Caco-2 (cell line): ENCODE measurements at regions of chr2 and their contacts with region 1.

Region 1: GRCh38 chr2:15636972-15637785 is 45.5 kb downstream of the DDX1 start:
- DNase-seq: peak; percentile 72 to 80
- H3K4me3 ChIP-seq: no peak overlapping the region
- H3K4me3 Mint-ChIP-seq: no peak overlapping the region
- H3K27ac Mint-ChIP-seq: no peak overlapping the region
- H3K4me1 ChIP-seq: peaks cover 55% of the 10 kb centered on the region
- H3K4me1 Mint-ChIP-seq: peaks cover 32% of the 10 kb centered on the region
- H3K27me3 ChIP-seq: no peaks in the 10 kb centered on the region
- H3K27me3 Mint-ChIP-seq: no peaks in the 10 kb centered on the region
- CTCF ChIP-seq: peak; percentile 85 to 98

Region 2: DNA sequence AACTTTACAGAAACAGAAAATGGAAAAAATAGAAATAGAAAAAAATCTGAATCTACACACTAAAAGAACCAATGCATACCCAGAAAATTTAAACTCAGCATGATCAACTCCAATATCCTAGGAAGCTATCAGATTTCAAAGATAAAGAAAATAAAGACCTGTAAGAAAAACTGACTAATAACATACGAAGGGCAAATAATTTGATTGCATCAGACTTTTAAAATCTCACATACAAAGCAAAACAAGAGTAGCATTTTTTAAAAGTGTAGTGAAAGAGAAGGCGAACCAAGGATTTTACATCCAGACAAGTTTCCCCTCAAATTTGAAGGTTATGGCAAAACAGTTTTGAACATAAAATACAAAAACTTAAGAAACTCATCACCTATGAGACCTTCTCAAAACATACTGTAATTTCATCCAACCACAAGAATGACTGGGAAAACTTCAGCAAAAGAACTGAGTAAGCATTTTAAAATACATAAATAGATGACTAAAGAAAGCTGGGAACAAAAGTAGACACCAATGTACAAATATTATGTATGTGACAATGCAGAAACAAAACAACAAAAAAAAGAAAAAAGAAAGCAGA is 130.9 kb before region 1 on chr2:
- CTCF ChIA-PET with region 1: no interaction called
- POLR2A ChIA-PET with region 1: no interaction called
- intact Hi-C with region 1: no loop called
- DNase-seq: no peak
- H3K4me3 ChIP-seq: no peak overlapping the region
- H3K4me3 Mint-ChIP-seq: no peak overlapping the region
- H3K27ac Mint-ChIP-seq: peak overlapping the region; percentile 36
- H3K4me1 ChIP-seq: no peaks in the 10 kb centered on the region
- H3K4me1 Mint-ChIP-seq: peaks cover 7% of the 10 kb centered on the region
- H3K27me3 ChIP-seq: no peaks in the 10 kb centered on the region
- H3K27me3 Mint-ChIP-seq: no peaks in the 10 kb centered on the region
- CTCF ChIP-seq: no peak

Region 3: DNA sequence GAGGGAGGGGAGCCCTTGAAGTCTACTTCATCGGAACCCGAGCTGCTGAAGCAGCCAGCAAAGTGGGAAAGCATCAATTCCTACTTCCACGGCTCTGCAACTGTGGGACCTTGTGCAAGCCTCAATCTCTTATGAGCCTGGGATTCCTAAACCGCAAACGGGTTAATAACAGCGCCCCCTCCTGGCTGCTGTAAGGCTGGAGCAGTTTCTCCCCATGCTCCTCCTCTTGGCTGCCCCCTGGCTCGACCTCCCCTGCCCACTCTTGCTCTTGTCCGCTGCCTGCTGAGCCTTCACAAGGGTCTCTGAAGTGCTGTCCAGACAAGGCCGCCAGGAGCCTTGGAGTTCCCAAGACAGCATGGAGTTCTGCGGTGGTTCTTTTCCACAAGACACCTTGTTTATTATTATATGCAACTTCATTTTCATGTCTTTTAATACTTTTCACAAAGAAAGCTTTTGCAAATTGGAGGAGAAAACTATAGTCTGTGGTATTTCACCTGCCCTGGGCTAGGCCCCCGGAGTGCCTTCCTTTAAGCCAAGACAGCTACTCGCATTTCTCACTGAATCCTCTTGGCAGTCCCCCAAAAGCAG is 111.7 kb after region 1 on chr2:
- CTCF ChIA-PET with region 1: no interaction called
- POLR2A ChIA-PET with region 1: no interaction called
- intact Hi-C with region 1: loop called (anchors 5 kb)
- DNase-seq: peak in 1 of 2 experiments; percentile 59
- H3K4me3 ChIP-seq: no peak overlapping the region
- H3K4me3 Mint-ChIP-seq: no peak overlapping the region
- H3K27ac Mint-ChIP-seq: peak overlapping the region; percentile 93
- H3K4me1 ChIP-seq: peaks cover 74% of the 10 kb centered on the region
- H3K4me1 Mint-ChIP-seq: peaks cover 48% of the 10 kb centered on the region
- H3K27me3 ChIP-seq: no peaks in the 10 kb centered on the region
- H3K27me3 Mint-ChIP-seq: no peaks in the 10 kb centered on the region
- CTCF ChIP-seq: peak; percentile 27 to 40

Region 4: DNA sequence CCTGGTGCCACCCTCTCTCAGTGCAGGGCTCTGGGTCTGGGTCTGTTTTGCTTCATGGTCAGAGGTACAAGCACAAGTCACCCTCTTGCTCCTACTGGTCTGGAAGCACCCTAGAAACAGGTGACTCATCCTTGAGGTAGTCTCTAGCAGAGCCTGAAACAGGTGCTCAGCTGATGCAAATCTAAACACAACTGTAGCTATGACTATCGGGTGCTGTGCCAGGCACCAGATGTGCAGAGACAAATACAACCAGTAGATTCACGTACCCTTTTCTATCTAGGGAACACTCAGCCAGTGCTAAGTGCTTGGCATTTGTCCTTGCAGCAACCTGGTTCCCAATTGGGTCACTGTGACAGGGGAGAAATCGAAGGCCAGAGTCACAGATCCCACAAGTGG is 162.3 kb after region 1 on chr2:
- CTCF ChIA-PET with region 1: no interaction called
- POLR2A ChIA-PET with region 1: no interaction called
- intact Hi-C with region 1: loop called (anchors 1 kb)
- DNase-seq: no peak
- H3K4me3 ChIP-seq: no peak overlapping the region
- H3K4me3 Mint-ChIP-seq: no peak overlapping the region
- H3K27ac Mint-ChIP-seq: peak overlapping the region; percentile 62
- H3K4me1 ChIP-seq: peaks cover 49% of the 10 kb centered on the region
- H3K4me1 Mint-ChIP-seq: peaks cover 39% of the 10 kb centered on the region
- H3K27me3 ChIP-seq: no peaks in the 10 kb centered on the region
- H3K27me3 Mint-ChIP-seq: no peaks in the 10 kb centered on the region
- CTCF ChIP-seq: no peak

Region 5: DNA sequence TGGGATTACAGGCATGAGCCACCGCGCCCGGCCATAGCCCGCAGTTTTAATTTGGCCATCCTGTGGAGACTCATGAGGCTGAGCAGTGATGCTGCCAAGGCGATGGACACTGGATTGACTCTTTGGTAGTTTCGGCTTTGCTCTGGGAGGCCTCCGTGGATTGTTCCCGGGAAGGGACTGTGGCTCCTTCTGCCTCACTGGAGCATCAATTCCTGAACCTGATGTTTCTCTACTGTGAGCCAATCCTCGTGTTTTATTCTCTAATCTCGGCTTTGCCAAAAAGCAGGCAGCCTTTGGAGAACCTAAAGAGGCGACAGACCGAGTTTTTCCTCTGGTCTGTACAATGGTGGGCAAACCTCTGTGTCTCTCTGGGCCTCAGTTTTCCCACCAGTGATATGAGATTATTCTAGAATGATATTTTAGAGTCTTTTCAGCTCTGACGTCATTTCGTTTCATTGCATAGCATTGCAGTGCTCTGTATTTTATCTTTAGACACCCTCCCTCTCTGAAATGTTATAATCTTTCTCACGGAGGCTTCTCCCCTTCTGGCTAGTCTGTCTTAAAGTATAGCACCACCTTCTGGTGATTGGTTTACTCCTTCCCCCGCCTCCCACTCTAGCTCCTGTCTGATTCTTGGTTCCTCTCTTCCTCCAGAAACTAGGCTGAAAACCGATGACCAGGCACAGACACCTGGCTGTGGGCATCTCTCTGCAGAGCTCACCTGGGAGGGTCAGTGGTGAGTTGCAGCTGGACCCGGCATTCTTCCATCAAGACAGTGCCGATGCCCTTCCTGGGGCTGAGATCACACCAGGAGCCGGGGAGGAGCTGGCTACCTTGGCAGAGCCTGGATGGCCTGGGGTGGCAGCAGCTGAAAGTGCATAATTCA is 644.5 kb after region 1 on chr2:
- CTCF ChIA-PET with region 1: no interaction called
- POLR2A ChIA-PET with region 1: no interaction called
- intact Hi-C with region 1: loop called (anchors 1 kb)
- DNase-seq: peak in 1 of 2 experiments; percentile 54
- H3K4me3 ChIP-seq: no peak overlapping the region
- H3K4me3 Mint-ChIP-seq: no peak overlapping the region
- H3K27ac Mint-ChIP-seq: peak overlapping the region; percentile 42
- H3K4me1 ChIP-seq: peaks cover 4% of the 10 kb centered on the region
- H3K4me1 Mint-ChIP-seq: peaks cover 21% of the 10 kb centered on the region
- H3K27me3 ChIP-seq: no peaks in the 10 kb centered on the region
- H3K27me3 Mint-ChIP-seq: no peaks in the 10 kb centered on the region
- CTCF ChIP-seq: peak; percentile 23 to 52

Region 6: DNA sequence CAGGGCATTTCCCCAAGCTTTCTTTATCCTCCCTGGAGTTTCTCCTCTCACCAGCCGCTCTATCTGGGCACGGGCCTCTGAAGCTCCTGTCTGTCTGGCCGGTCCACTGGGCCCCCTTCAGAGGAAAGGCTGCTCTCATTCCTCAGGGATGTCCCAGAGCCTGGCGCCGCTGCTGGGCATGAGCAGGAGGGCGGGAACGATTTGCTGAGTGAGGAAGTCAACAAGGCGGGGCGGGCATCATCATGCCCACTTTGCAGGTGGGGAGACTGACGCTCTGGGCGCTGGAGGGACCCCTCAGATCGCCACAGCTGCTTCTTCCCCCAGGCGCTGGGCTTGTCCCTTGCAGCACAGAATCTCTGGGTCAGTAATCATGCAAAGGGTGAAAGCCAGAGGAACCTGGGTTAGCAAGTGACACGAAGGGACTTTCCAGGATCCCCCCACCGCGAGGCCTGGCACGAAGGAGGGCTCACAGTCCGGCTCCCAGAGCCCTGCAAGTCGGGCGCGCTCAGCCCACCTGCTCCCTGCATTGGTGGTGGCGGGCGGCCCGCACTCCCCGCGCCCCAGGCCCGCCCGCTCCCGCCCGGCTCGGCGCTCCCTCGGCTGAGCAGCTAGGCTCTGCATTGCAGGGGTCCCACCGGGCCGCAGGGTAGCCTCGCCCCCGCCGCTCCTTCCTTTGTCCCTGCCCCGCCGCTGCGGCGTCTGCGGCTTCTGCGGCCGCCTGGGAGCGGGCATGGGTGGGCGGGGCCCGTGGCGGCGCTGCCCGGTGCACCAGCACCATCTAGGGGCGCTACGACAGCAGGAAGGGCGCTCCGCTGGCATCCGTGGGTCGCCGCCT is 870.7 kb after region 1 on chr2:
- CTCF ChIA-PET with region 1: no interaction called
- POLR2A ChIA-PET with region 1: no interaction called
- intact Hi-C with region 1: loop called (anchors 1 kb)
- DNase-seq: peak; percentile 66 to 82
- H3K4me3 ChIP-seq: peak overlapping the region; percentile 26
- H3K4me3 Mint-ChIP-seq: peak overlapping the region; percentile 61
- H3K27ac Mint-ChIP-seq: peak overlapping the region; percentile 37
- H3K4me1 ChIP-seq: peaks cover 36% of the 10 kb centered on the region
- H3K4me1 Mint-ChIP-seq: peaks cover 12% of the 10 kb centered on the region
- H3K27me3 ChIP-seq: no peaks in the 10 kb centered on the region
- H3K27me3 Mint-ChIP-seq: no peaks in the 10 kb centered on the region
- CTCF ChIP-seq: peak; percentile 83 to 91